Sciatic nerve (tissue), 2 donors: ENCODE measurements at regions of chr16 and their contacts with region 1.

Region 1: DNA sequence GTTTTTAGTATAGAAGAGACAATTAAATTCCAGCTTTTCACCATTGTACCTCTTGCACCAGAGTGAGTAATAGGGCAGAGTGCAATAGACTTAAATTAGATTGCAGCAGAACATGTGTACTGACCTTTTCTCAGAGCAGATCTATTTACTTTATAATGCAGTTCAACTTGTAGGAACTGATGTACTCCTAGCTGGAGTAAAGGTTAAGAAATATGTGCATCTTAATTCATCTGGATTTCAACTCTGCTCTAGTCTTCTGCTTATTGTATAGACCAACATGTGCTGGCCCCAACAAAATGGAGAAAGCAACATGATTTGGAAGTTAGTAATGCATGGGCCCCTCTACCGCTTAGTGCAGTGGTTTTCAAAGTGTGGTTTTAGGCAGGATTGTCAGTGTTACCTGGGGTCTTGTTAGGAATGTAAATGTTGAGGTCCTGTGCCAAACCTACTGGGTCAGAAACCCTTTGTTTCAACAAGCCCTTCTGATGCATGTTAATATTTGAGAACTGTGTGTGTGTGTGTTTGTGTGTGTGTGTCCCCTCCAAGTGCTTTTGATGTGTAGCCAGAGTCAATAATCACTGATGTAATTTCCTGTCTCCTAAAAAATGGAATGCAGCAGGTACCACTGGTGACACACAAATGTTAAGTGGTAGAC is 138.6 kb downstream of the TOX3 start:
- DNase-seq: no peak
- ATAC-seq: no peak

Region 2: DNA sequence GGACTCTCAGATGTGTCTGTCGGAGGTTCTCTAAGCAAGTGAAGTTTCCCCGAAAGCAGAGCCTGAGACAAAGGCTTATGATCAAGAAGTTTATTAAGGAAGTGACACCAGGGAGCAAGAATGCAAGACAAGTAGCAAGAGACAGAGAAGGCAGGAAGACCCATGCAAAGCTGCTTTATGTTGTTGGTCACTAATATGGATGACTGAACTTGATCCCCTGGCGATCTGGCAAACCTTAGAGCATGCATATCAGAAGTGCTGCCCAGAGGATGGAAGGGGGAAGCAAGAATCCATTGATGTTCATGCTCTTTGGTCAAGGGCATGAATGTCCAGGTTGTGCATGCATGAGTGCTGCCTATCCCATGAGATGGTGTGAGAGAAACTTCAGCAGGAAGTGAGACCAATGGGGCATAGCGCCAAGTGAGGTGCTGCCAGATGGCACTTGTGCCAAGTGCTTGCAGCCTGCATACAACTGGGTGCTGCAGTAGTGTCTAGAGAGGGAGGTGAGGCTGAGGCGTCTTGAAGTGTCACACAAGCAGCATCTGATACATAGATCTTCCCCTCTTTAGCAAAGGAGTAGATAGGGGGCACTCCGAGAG is 1433.8 kb before region 1 on chr16:
- intact Hi-C with region 1: loop called (anchors 5 kb)
- DNase-seq: no peak
- ATAC-seq: no peak